WTC11 (cell line): ENCODE measurements at regions of chr12 and their contacts with region 1.

Region 1: DNA sequence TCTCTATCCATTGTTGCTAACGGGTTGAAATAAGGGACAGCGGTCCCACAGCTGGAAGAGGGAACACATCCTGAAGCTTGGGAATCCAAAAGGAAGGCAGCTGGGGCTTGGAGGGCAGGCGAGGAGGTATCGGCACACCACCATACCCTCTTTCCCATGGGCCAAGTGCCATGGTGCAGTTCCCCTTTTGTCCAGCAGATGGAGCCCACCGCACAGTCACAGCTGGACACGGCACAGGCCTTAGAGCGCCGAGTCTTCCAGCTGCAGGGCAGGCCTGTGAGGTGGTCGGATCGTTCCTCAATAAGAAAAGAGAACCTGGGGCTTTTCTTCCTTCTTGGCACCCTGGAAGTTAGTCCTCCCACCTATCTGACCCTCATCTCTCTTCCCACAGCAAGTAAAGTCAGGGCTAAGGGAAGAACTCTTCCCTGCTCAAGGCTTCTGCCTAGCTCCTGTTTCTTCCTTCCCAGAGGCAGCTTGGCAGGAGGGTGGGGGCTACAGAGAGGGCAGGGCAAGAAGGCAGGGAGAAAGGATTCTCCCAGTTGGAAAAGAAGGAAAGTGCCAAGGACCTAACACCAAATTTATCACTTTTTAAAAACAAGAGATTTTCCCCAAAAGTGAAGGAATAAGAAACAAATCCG is 8.6 kb downstream of the PPP1R1A start:
- DNase-seq: peak; percentile 96
- ATAC-seq: peak; percentile 96
- H3K4me3 Mint-ChIP-seq: no peak overlapping the region
- H3K27ac Mint-ChIP-seq: no peak overlapping the region
- H3K4me1 Mint-ChIP-seq: peaks cover 34% of the 10 kb centered on the region
- H3K27me3 Mint-ChIP-seq: peaks cover 39% of the 10 kb centered on the region
- CTCF ChIP-seq: peak; percentile 100

Region 2: DNA sequence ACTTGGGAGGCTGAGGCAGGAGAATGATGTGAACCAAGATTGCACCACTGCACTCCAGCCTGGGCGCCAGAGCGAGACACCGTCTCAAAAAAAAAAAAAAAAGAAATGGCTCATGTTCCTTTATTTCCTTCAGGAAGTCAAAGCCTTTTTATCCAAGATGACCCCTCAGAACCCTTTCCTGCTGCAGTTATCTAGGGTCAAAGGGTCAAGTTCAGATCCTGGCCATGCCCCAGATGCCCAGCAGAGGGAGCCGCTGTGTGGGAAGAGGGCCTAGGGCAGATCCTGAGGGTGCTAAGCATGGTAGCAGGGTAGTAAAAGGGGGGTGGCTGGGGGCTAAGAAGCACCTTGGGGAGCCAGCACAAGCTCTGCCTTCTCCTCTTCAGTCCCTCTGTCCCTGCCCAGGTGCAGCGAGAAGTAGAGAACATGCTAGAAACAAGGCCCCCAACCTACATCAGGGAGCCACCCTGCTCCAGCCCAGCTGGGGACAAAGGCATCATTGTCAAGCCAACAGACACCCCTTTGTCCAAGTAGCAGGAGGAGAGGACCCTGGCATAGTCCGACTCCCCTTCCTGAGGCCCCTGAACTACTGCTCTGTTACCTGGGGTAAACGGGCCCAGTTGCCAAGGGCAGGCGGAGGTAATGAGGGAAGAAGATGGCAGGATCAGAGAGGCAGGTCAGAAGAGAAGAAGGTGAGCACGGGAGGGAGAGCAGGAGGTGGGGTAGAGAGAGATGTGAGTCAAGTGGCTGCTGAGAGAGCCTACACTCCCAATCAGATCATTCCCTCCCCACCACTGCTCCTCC is 285.5 kb before region 1 on chr12:
- CTCF ChIA-PET with region 1: no interaction called
- POLR2A ChIA-PET with region 1: no interaction called
- DNase-seq: peak; percentile 88
- ATAC-seq: peak; percentile 76
- H3K4me3 Mint-ChIP-seq: no peak overlapping the region
- H3K27ac Mint-ChIP-seq: no peak overlapping the region
- H3K4me1 Mint-ChIP-seq: peaks cover 4% of the 10 kb centered on the region
- H3K27me3 Mint-ChIP-seq: peaks cover 4% of the 10 kb centered on the region
- CTCF ChIP-seq: peak; percentile 77

Region 3: GRCh38 chr12:54549774-54550451 is 29.9 kb before region 1 on chr12:
- CTCF ChIA-PET with region 1: interaction called, 26 read pairs
- POLR2A ChIA-PET with region 1: interaction called, 3 read pairs
- DNase-seq: peak; percentile 42
- ATAC-seq: peak; percentile 69
- H3K4me3 Mint-ChIP-seq: peak overlapping the region; percentile 74
- H3K27ac Mint-ChIP-seq: no peak overlapping the region
- H3K4me1 Mint-ChIP-seq: peaks cover 27% of the 10 kb centered on the region
- H3K27me3 Mint-ChIP-seq: no peaks in the 10 kb centered on the region; the same call in 1 of the 2 replicates
- CTCF ChIP-seq: no peak

Region 4: GRCh38 chr12:54596526-54596946 is 16.7 kb after region 1 on chr12:
- CTCF ChIA-PET with region 1: interaction called, 90 read pairs
- POLR2A ChIA-PET with region 1: interaction called, 3 read pairs
- DNase-seq: peak; percentile 86
- ATAC-seq: peak; percentile 94
- H3K4me3 Mint-ChIP-seq: no peak overlapping the region
- H3K27ac Mint-ChIP-seq: no peak overlapping the region
- H3K4me1 Mint-ChIP-seq: peaks cover 5% of the 10 kb centered on the region
- H3K27me3 Mint-ChIP-seq: peaks cover 82% of the 10 kb centered on the region
- CTCF ChIP-seq: peak; percentile 77

Region 5: DNA sequence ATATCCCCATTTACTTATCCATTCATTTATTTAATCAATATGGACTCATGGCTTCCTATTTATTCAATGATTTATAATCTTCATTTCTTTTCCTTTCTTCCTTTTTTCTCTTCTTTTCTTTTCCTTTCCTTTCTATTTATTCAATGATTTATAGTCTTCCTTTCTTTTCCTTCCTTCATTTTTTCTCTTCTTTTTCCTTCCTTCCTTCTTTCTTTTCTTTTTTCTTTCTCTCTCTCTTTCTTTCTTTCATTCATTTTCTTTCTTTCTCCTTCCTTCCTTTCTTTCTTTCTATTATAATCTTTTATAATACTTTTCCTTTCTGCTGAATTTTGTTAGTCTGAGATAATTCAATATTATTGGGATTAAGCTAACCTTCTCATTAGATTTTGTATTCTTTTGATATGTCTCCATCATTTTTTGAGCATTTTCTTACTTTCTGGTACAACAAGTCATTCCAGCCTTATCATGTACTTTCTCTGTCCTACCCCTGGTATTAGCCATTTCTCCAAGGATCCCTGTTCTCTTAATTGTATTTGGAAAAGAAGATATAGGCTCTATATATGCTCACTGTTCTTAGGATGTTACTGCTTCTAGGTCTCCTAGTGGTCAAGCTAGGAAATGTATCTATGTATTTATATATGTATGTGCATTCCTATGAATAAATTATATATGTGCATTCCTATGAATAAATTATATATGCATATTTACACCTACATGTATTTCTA is 42.8 kb after region 1 on chr12:
- CTCF ChIA-PET with region 1: interaction called, 10 read pairs
- POLR2A ChIA-PET with region 1: no interaction called
- DNase-seq: no peak
- ATAC-seq: no peak
- H3K4me3 Mint-ChIP-seq: no peak overlapping the region
- H3K27ac Mint-ChIP-seq: no peak overlapping the region
- H3K4me1 Mint-ChIP-seq: no peaks in the 10 kb centered on the region
- H3K27me3 Mint-ChIP-seq: peaks cover 54% of the 10 kb centered on the region
- CTCF ChIP-seq: no peak

Region 6: DNA sequence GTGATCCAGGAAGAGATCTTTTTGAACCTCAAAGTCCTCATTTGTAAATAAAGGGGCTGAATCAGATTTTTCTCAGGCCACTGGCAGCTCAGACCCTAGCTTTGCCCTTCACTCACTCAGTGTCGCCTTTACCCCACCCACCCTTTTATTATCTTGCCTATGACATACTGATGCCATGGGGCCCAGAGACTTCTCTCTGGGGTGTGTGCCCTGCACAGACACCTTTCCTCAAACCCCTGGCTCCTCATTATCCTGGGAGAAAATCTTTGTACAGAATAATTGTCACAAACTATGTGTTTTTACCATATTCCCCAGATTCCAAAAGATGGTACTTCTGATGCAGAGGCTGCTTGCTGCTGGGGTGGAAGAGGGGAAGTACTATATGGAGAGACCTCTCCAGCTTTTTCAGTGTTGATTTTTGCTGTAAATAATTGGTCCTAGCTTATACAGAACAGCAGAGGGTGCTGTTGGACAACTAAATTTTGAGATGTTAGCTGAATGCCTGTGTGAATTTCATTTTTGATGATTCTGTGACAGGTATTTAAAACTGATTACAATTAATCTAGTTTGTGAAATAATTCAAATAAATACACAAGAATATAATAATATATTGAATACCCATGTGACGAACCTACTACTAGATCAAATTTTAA is 122.3 kb after region 1 on chr12:
- CTCF ChIA-PET with region 1: interaction called, 11 read pairs
- POLR2A ChIA-PET with region 1: no interaction called
- DNase-seq: no peak
- ATAC-seq: peak; percentile 69
- H3K4me3 Mint-ChIP-seq: no peak overlapping the region
- H3K27ac Mint-ChIP-seq: no peak overlapping the region
- H3K4me1 Mint-ChIP-seq: peaks cover 22% of the 10 kb centered on the region
- H3K27me3 Mint-ChIP-seq: no peaks in the 10 kb centered on the region
- CTCF ChIP-seq: peak; percentile 43